Stomach (tissue), 19 donors: ENCODE measurements at regions of chr7 and their contacts with region 1.

Region 1: GRCh38 chr7:39746103-39746819 is 122.9 kb downstream of the RALA start:
- DNase-seq: peak; percentile 80 to 93
- H3K4me3 ChIP-seq: no peak overlapping the region
- H3K27ac ChIP-seq: no peak overlapping the region
- H3K4me1 ChIP-seq: peaks cover 0 to 13% (median 4%) of the 10 kb centered on the region in 4 donors
- H3K27me3 ChIP-seq: no peaks in the 10 kb centered on the region
- CTCF ChIP-seq: peak in 5 of 7 experiments; percentile 34 to 77 (median 64)
- EP300 ChIP-seq: no peak
- POLR2A ChIP-seq: no peak

Region 2: GRCh38 chr7:39580149-39580874 is 165.9 kb before region 1 on chr7:
- intact Hi-C with region 1: loop called (anchors 5 kb)
- DNase-seq: peak; percentile 83 to 97
- H3K4me3 ChIP-seq: no peak overlapping the region
- H3K27ac ChIP-seq: no peak overlapping the region
- H3K4me1 ChIP-seq: no peaks in the 10 kb centered on the region
- H3K27me3 ChIP-seq: no peaks in the 10 kb centered on the region
- CTCF ChIP-seq: peak in 5 of 7 experiments; percentile 60 to 90 (median 86)
- EP300 ChIP-seq: no peak
- POLR2A ChIP-seq: no peak

Region 3: GRCh38 chr7:39623018-39623731 is 123.1 kb before region 1 on chr7 and contains the start of gene RALA:
- intact Hi-C with region 1: no loop called
- DNase-seq: peak; percentile 90 to 98
- H3K4me3 ChIP-seq: peak within 1 kb of the TSS; percentile 87 to 96 (median 94)
- H3K27ac ChIP-seq: peak within 1 kb of the TSS; percentile 90 to 97 (median 91)
- H3K4me1 ChIP-seq: peaks cover 29 to 55% (median 51%) of the 10 kb centered on the region in 4 donors
- H3K27me3 ChIP-seq: no peaks in the 10 kb centered on the region
- CTCF ChIP-seq: no peak
- EP300 ChIP-seq: no peak
- POLR2A ChIP-seq: peak in 2 of 4 donors; percentile 31 to 62
- total RNA-seq, gene RALA: 10.6 to 40.3 (median 33.8) TPM